ENCODE measurements at regions of chr21 and their contacts with region 1.

Region 1: GRCh38 chr21:33199516-33200217 is 30.1 kb upstream of the IFNAR2 start:
- DNase-seq: peak; percentile 73
- ATAC-seq: peak; percentile 76
- H3K4me3 ChIP-seq: no peak overlapping the region
- H3K27ac ChIP-seq: no peak overlapping the region
- H3K4me1 ChIP-seq: peaks cover 14% of the 10 kb centered on the region
- H3K27me3 ChIP-seq: no peaks in the 10 kb centered on the region; a peak in 1 of 4 replicates
- CTCF ChIP-seq: peak; percentile 74 to 90 (median 75)
- EP300 ChIP-seq: no peak
- POLR2A ChIP-seq: no peak
- RAD21 ChIP-seq: peak; percentile 96

Region 2: DNA sequence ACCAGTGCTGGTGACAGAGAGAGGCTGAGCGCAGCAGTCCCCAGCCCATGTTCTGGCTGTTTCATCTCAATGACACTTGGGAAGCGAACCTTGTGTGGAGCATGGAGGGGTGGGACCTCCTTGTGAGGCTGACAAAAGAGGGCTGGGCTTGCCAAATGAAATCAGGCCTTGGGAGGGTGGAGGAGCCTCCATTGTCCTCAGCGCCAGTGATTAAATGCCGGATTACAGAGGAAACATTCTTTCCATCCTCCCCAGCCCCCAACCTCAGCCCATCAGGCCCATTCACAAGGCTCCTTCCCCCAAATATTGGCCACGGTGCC is 364.8 kb before region 1 on chr21:
- CTCF ChIA-PET with region 1: interaction called, 47 read pairs
- POLR2A ChIA-PET with region 1: no interaction called
- RAD21 ChIA-PET with region 1: interaction called, 31 read pairs
- SMC1A ChIA-PET with region 1: interaction called, 20 read pairs
- in situ Hi-C with region 1: loop called (anchors 5 kb)
- intact Hi-C with region 1: loop called (anchors 2 kb)
- DNase-seq: no peak
- ATAC-seq: no peak
- H3K4me3 ChIP-seq: no peak overlapping the region
- H3K27ac ChIP-seq: no peak overlapping the region
- H3K4me1 ChIP-seq: no peaks in the 10 kb centered on the region
- H3K27me3 ChIP-seq: no peaks in the 10 kb centered on the region
- CTCF ChIP-seq: no peak
- EP300 ChIP-seq: no peak
- POLR2A ChIP-seq: no peak
- RAD21 ChIP-seq: no peak

Region 3: GRCh38 chr21:32994305-32994704 is 205.4 kb before region 1 on chr21:
- CTCF ChIA-PET with region 1: interaction called, 46 read pairs
- POLR2A ChIA-PET with region 1: no interaction called
- RAD21 ChIA-PET with region 1: interaction called, 14 read pairs
- SMC1A ChIA-PET with region 1: interaction called, 21 read pairs
- in situ Hi-C with region 1: no loop called
- intact Hi-C with region 1: loop called (anchors 2 kb)
- DNase-seq: no peak
- ATAC-seq: peak; percentile 38; the same call in 1 of the 3 replicates
- H3K4me3 ChIP-seq: no peak overlapping the region
- H3K27ac ChIP-seq: no peak overlapping the region
- H3K4me1 ChIP-seq: no peaks in the 10 kb centered on the region
- H3K27me3 ChIP-seq: peaks cover 0 to 2% of the 10 kb centered on the region in 2 experiments; a peak in 3 of 4 replicates
- CTCF ChIP-seq: peak; percentile 16 to 35 (median 23); a peak in 3 of 6 replicates
- EP300 ChIP-seq: no peak
- POLR2A ChIP-seq: no peak
- RAD21 ChIP-seq: peak; percentile 39; the same call in 1 of the 2 replicates

Region 4: DNA sequence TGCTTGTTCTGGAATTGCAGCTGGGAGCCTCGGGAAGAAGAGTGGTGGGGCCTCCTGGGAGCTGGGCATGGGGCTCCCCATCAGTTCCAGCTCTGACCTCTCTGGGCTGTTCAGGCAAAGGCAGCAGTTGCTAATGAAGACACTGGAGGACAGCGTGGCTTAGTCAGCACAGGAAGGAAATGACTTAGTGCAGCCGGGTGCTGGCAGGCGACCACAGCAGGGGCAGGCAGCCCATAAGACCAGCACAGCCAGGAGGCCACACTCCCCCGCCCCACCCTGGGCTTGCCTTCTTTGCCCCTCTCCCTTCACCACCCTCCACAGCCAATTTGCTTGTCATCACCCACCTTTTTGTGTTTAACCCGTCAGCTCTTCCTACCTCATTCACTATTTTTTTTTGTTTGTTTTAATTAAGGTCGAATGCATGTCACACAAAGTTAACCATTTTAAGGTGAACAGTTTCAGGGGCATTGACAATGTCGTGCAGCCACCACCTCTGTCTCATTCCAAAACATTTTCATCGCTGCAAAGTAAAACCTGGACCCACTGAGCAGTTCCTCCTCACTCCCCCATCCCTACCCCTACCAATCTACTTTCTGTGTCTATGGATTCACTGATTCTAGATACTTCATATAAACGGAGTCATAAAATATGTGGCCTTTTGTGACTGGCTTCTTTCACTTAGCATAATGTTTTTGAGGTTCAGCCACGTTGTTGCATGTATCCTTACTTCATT is 163.1 kb before region 1 on chr21:
- CTCF ChIA-PET with region 1: no interaction called
- POLR2A ChIA-PET with region 1: no interaction called
- RAD21 ChIA-PET with region 1: no interaction called
- SMC1A ChIA-PET with region 1: no interaction called
- in situ Hi-C with region 1: no loop called
- intact Hi-C with region 1: no loop called
- DNase-seq: no peak
- ATAC-seq: peak; percentile 74
- H3K4me3 ChIP-seq: no peak overlapping the region
- H3K27ac ChIP-seq: no peak overlapping the region
- H3K4me1 ChIP-seq: no peaks in the 10 kb centered on the region
- H3K27me3 ChIP-seq: peaks cover 0 to 2% of the 10 kb centered on the region in 2 experiments; a peak in 2 of 4 replicates
- CTCF ChIP-seq: no peak
- EP300 ChIP-seq: no peak
- POLR2A ChIP-seq: no peak
- RAD21 ChIP-seq: no peak

Region 5: DNA sequence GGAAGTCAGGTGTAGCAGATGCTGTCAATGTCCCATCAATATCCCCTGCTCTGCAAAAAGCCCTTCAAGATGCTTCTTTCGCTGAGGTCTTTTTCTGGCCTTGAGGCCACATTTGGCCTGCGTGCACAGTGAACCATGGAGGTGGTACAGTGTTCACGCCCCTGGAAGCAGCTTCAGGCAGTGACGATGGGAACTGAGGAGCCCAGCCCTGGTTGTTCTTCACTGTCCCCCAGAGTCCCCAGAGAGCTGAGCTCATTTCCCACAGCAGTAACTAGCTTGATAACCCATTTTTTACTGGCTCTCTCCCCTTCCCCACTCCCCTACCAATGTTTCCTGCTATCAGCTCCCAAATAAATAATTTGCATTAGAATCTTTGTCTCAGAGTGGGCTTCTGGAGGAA is 53.2 kb before region 1 on chr21:
- CTCF ChIA-PET with region 1: no interaction called
- POLR2A ChIA-PET with region 1: no interaction called
- RAD21 ChIA-PET with region 1: no interaction called
- SMC1A ChIA-PET with region 1: no interaction called
- in situ Hi-C with region 1: no loop called
- intact Hi-C with region 1: no loop called
- DNase-seq: no peak
- ATAC-seq: no peak
- H3K4me3 ChIP-seq: no peak overlapping the region
- H3K27ac ChIP-seq: no peak overlapping the region
- H3K4me1 ChIP-seq: no peaks in the 10 kb centered on the region
- H3K27me3 ChIP-seq: peaks cover 0 to 7% of the 10 kb centered on the region in 2 experiments; a peak in 2 of 4 replicates
- CTCF ChIP-seq: no peak
- EP300 ChIP-seq: no peak
- POLR2A ChIP-seq: no peak
- RAD21 ChIP-seq: no peak

Region 6: GRCh38 chr21:33229784-33230544 is 30.3 kb after region 1 on chr21 and contains the start of gene IFNAR2:
- CTCF ChIA-PET with region 1: interaction called, 7 read pairs
- POLR2A ChIA-PET with region 1: interaction called, 20 read pairs
- RAD21 ChIA-PET with region 1: interaction called, 50 read pairs
- SMC1A ChIA-PET with region 1: interaction called, 23 read pairs
- in situ Hi-C with region 1: no loop called
- intact Hi-C with region 1: no loop called
- DNase-seq: no peak
- ATAC-seq: peak; percentile 75
- H3K4me3 ChIP-seq: peak within 1 kb of the TSS; percentile 100
- H3K27ac ChIP-seq: peak within 1 kb of the TSS; percentile 96
- H3K4me1 ChIP-seq: peaks cover 13% of the 10 kb centered on the region
- H3K27me3 ChIP-seq: no peaks in the 10 kb centered on the region
- CTCF ChIP-seq: no peak
- EP300 ChIP-seq: no peak
- POLR2A ChIP-seq: peak; percentile 64; the same call in 1 of the 2 replicates
- RAD21 ChIP-seq: no peak
- polyA plus RNA-seq, gene IFNAR2: 8.5 to 23.3 TPM

Region 7: DNA sequence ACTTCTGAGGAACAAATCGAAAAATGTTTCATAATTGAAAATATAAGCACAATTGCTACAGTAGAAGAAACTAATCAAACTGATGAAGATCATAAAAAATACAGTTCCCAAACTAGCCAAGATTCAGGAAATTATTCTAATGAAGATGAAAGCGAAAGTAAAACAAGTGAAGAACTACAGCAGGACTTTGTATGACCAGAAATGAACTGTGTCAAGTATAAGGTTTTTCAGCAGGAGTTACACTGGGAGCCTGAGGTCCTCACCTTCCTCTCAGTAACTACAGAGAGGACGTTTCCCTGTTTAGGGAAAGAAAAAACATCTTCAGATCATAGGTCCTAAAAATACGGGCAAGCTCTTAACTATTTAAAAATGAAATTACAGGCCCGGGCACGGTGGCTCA is 155.7 kb after region 1 on chr21:
- CTCF ChIA-PET with region 1: interaction called, 57 read pairs
- POLR2A ChIA-PET with region 1: no interaction called
- RAD21 ChIA-PET with region 1: interaction called, 40 read pairs
- SMC1A ChIA-PET with region 1: interaction called, 34 read pairs
- in situ Hi-C with region 1: no loop called
- intact Hi-C with region 1: no loop called
- DNase-seq: no peak
- ATAC-seq: no peak
- H3K4me3 ChIP-seq: no peak overlapping the region
- H3K27ac ChIP-seq: no peak overlapping the region
- H3K4me1 ChIP-seq: no peaks in the 10 kb centered on the region
- H3K27me3 ChIP-seq: no peaks in the 10 kb centered on the region
- CTCF ChIP-seq: no peak
- EP300 ChIP-seq: no peak
- POLR2A ChIP-seq: no peak
- RAD21 ChIP-seq: no peak

Region 8: GRCh38 chr21:33380483-33380998 is 180.9 kb after region 1 on chr21:
- CTCF ChIA-PET with region 1: interaction called, 25 read pairs
- POLR2A ChIA-PET with region 1: interaction called, 4 read pairs
- RAD21 ChIA-PET with region 1: interaction called, 12 read pairs
- SMC1A ChIA-PET with region 1: interaction called, 7 read pairs
- in situ Hi-C with region 1: loop called (anchors 5 kb)
- intact Hi-C with region 1: loop called (anchors 2 kb)
- DNase-seq: peak; percentile 95
- ATAC-seq: peak; percentile 70
- H3K4me3 ChIP-seq: no peak overlapping the region; the same call in 1 of the 2 replicates
- H3K27ac ChIP-seq: peak overlapping the region; percentile 95
- H3K4me1 ChIP-seq: peaks cover 54% of the 10 kb centered on the region
- H3K27me3 ChIP-seq: no peaks in the 10 kb centered on the region
- CTCF ChIP-seq: no peak
- EP300 ChIP-seq: peak; percentile 30 to 48; a peak in 2 of 4 replicates
- POLR2A ChIP-seq: peak; percentile 69; the same call in 1 of the 2 replicates
- RAD21 ChIP-seq: no peak

Region 9: GRCh38 chr21:33392284-33392985 is 192.8 kb after region 1 on chr21:
- CTCF ChIA-PET with region 1: no interaction called
- POLR2A ChIA-PET with region 1: no interaction called
- RAD21 ChIA-PET with region 1: no interaction called
- SMC1A ChIA-PET with region 1: no interaction called
- in situ Hi-C with region 1: no loop called
- intact Hi-C with region 1: no loop called
- DNase-seq: no peak
- ATAC-seq: no peak
- H3K4me3 ChIP-seq: no peak overlapping the region
- H3K27ac ChIP-seq: no peak overlapping the region
- H3K4me1 ChIP-seq: peaks cover 12% of the 10 kb centered on the region
- H3K27me3 ChIP-seq: no peaks in the 10 kb centered on the region
- CTCF ChIP-seq: no peak
- EP300 ChIP-seq: no peak
- POLR2A ChIP-seq: no peak
- RAD21 ChIP-seq: no peak

Region 10: GRCh38 chr21:33608559-33608958 is 408.9 kb after region 1 on chr21:
- CTCF ChIA-PET with region 1: interaction called, 28 read pairs
- POLR2A ChIA-PET with region 1: no interaction called
- RAD21 ChIA-PET with region 1: interaction called, 14 read pairs
- SMC1A ChIA-PET with region 1: interaction called, 10 read pairs
- in situ Hi-C with region 1: no loop called
- intact Hi-C with region 1: loop called (anchors 2 kb)
- DNase-seq: no peak
- ATAC-seq: no peak
- H3K4me3 ChIP-seq: no peak overlapping the region
- H3K27ac ChIP-seq: no peak overlapping the region
- H3K4me1 ChIP-seq: no peaks in the 10 kb centered on the region
- H3K27me3 ChIP-seq: no peaks in the 10 kb centered on the region
- CTCF ChIP-seq: no peak
- EP300 ChIP-seq: no peak
- POLR2A ChIP-seq: no peak
- RAD21 ChIP-seq: no peak